Mammary epithelial cell (primary cell): ENCODE measurements at regions of chr4 and their contacts with region 1.

Region 1: GRCh38 chr4:130478406-130478805 is 1382.5 kb downstream of the C4orf33 start:
- DNase-seq: peak; percentile 16
- H3K4me3 ChIP-seq: no peak overlapping the region
- H3K27ac ChIP-seq: peak overlapping the region; percentile 46
- H3K4me1 ChIP-seq: peaks cover 11% of the 10 kb centered on the region
- H3K27me3 ChIP-seq: no peaks in the 10 kb centered on the region
- CTCF ChIP-seq: no peak

Region 2: GRCh38 chr4:130043732-130044160 is 434.7 kb before region 1 on chr4:
- CTCF ChIA-PET with region 1: no interaction called
- dilution Hi-C with region 1: no loop called
- in situ Hi-C with region 1: no loop called
- intact Hi-C with region 1: no loop called
- DNase-seq: no peak
- H3K4me3 ChIP-seq: no peak overlapping the region
- H3K27ac ChIP-seq: no peak overlapping the region
- H3K4me1 ChIP-seq: no peaks in the 10 kb centered on the region
- H3K27me3 ChIP-seq: no peaks in the 10 kb centered on the region
- CTCF ChIP-seq: no peak

Region 3: DNA sequence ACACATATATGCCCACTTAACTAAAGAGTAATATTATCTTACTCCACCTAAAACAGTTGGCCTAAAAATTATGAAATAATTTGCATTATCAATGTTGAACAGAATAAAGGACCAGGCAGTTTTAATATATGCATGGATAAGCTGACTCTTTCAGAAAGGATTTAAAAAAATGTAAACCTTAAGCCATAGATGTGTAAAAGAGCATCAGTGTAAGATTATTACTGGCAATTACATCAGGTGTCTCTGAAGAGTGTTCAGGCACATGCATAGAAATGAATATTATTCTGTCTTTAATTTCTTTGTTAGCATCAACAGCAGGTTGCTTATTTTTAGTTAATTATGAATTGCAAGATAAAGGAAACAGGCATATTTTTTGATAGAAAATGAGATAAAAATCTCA is 28.7 kb before region 1 on chr4:
- CTCF ChIA-PET with region 1: no interaction called
- dilution Hi-C with region 1: loop called (anchors 5 kb)
- in situ Hi-C with region 1: no loop called
- intact Hi-C with region 1: no loop called
- DNase-seq: no peak
- H3K4me3 ChIP-seq: no peak overlapping the region
- H3K27ac ChIP-seq: no peak overlapping the region
- H3K4me1 ChIP-seq: no peaks in the 10 kb centered on the region
- H3K27me3 ChIP-seq: no peaks in the 10 kb centered on the region
- CTCF ChIP-seq: no peak

Region 4: DNA sequence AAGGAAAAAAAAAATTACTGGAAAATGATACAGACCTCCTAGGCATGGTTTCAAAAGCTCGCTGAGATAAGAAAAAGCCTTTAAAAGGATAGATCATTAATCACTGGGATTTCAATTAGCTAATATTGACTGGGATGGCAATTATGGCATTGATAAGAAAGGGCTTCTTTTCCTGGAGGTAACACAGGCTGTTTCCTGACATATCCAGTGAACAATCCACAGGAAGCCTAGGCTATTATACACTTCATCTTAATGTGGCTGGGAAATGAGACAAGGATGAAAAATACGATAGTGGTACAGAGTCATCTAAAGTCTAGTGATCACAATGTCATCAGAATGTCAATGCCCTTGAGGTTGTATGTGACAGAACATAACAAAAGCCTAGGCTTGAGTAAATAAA is 196.9 kb after region 1 on chr4:
- CTCF ChIA-PET with region 1: no interaction called
- dilution Hi-C with region 1: no loop called
- in situ Hi-C with region 1: no loop called
- intact Hi-C with region 1: no loop called
- DNase-seq: no peak
- H3K4me3 ChIP-seq: no peak overlapping the region
- H3K27ac ChIP-seq: no peak overlapping the region
- H3K4me1 ChIP-seq: no peaks in the 10 kb centered on the region
- H3K27me3 ChIP-seq: no peaks in the 10 kb centered on the region
- CTCF ChIP-seq: no peak